Caco-2 (cell line): ENCODE measurements at regions of chr20 and their contacts with region 1.

Region 1: GRCh38 chr20:32779500-32780211 is 17.5 kb downstream of the DNMT3B start:
- DNase-seq: peak in 1 of 2 experiments; percentile 58
- H3K4me3 ChIP-seq: no peak overlapping the region
- H3K4me3 Mint-ChIP-seq: no peak overlapping the region
- H3K27ac Mint-ChIP-seq: no peak overlapping the region
- H3K4me1 ChIP-seq: peaks cover 31% of the 10 kb centered on the region
- H3K4me1 Mint-ChIP-seq: peaks cover 27% of the 10 kb centered on the region
- H3K27me3 ChIP-seq: no peaks in the 10 kb centered on the region
- H3K27me3 Mint-ChIP-seq: no peaks in the 10 kb centered on the region
- CTCF ChIP-seq: no peak

Region 2: GRCh38 chr20:32521780-32522525 is 257.7 kb before region 1 on chr20:
- CTCF ChIA-PET with region 1: interaction called, 9 read pairs
- POLR2A ChIA-PET with region 1: interaction called, 4 read pairs
- intact Hi-C with region 1: loop called (anchors 5 kb)
- DNase-seq: peak; percentile 87 to 94
- H3K4me3 ChIP-seq: no peak overlapping the region
- H3K4me3 Mint-ChIP-seq: no peak overlapping the region
- H3K27ac Mint-ChIP-seq: no peak overlapping the region
- H3K4me1 ChIP-seq: no peaks in the 10 kb centered on the region; the same call in 1 of the 2 replicates
- H3K4me1 Mint-ChIP-seq: no peaks in the 10 kb centered on the region
- H3K27me3 ChIP-seq: no peaks in the 10 kb centered on the region
- H3K27me3 Mint-ChIP-seq: no peaks in the 10 kb centered on the region
- CTCF ChIP-seq: peak; percentile 98 to 99

Region 3: GRCh38 chr20:32674362-32674789 is 105.3 kb before region 1 on chr20:
- CTCF ChIA-PET with region 1: interaction called, 155 read pairs
- POLR2A ChIA-PET with region 1: interaction called, 5 read pairs
- intact Hi-C with region 1: loop called (anchors 1 kb)
- DNase-seq: peak; percentile 79 to 91
- H3K4me3 ChIP-seq: no peak overlapping the region
- H3K4me3 Mint-ChIP-seq: no peak overlapping the region
- H3K27ac Mint-ChIP-seq: peak overlapping the region; percentile 74
- H3K4me1 ChIP-seq: peaks cover 13% of the 10 kb centered on the region; the same call in 1 of the 2 replicates
- H3K4me1 Mint-ChIP-seq: peaks cover 23% of the 10 kb centered on the region
- H3K27me3 ChIP-seq: no peaks in the 10 kb centered on the region
- H3K27me3 Mint-ChIP-seq: no peaks in the 10 kb centered on the region
- CTCF ChIP-seq: peak; percentile 97 to 99

Region 4: DNA sequence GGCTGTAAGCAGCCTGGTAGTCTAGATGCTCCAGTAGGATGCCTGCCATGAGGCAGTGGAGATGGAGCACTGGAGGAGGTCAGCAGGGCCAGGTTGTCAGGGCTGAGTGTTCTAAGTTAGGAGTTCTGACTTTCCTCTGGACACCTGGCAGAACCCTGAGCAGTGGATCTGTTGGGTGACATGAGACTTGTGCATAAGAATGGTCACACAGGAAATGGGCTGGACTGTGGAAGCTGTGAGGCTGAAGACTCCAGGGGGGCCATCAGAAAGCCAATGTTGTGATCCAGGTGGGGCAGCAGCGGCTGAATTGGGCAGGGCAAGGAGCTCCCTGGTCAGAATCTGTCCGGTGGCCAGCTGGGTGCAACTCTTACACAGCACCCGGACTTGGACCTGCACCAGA is 82.0 kb before region 1 on chr20:
- CTCF ChIA-PET with region 1: interaction called, 20 read pairs
- POLR2A ChIA-PET with region 1: interaction called, 3 read pairs
- intact Hi-C with region 1: no loop called
- DNase-seq: no peak
- H3K4me3 ChIP-seq: no peak overlapping the region
- H3K4me3 Mint-ChIP-seq: no peak overlapping the region
- H3K27ac Mint-ChIP-seq: peak overlapping the region; percentile 43
- H3K4me1 ChIP-seq: peaks cover 19% of the 10 kb centered on the region
- H3K4me1 Mint-ChIP-seq: peaks cover 31% of the 10 kb centered on the region
- H3K27me3 ChIP-seq: no peaks in the 10 kb centered on the region
- H3K27me3 Mint-ChIP-seq: no peaks in the 10 kb centered on the region
- CTCF ChIP-seq: no peak

Region 5: GRCh38 chr20:32743237-32744112 is 36.2 kb before region 1 on chr20 and contains the start of gene COMMD7:
- CTCF ChIA-PET with region 1: interaction called, 42 read pairs
- POLR2A ChIA-PET with region 1: interaction called, 9 read pairs
- intact Hi-C with region 1: loop called (anchors 1 kb)
- DNase-seq: peak; percentile 89 to 90
- H3K4me3 ChIP-seq: peak within 1 kb of the TSS; percentile 88
- H3K4me3 Mint-ChIP-seq: peak within 1 kb of the TSS; percentile 89
- H3K27ac Mint-ChIP-seq: peak within 1 kb of the TSS; percentile 87
- H3K4me1 ChIP-seq: peaks cover 39% of the 10 kb centered on the region
- H3K4me1 Mint-ChIP-seq: peaks cover 20% of the 10 kb centered on the region
- H3K27me3 ChIP-seq: no peaks in the 10 kb centered on the region
- H3K27me3 Mint-ChIP-seq: no peaks in the 10 kb centered on the region
- CTCF ChIP-seq: no peak
- total RNA-seq, gene COMMD7: 142 and 160 TPM in 2 replicates

Region 6: GRCh38 chr20:32767418-32768198 is 12.0 kb before region 1 on chr20:
- CTCF ChIA-PET with region 1: interaction called, 53 read pairs
- POLR2A ChIA-PET with region 1: interaction called, 10 read pairs
- intact Hi-C with region 1: loop called (anchors 1 kb)
- DNase-seq: no peak
- H3K4me3 ChIP-seq: no peak overlapping the region
- H3K4me3 Mint-ChIP-seq: no peak overlapping the region
- H3K27ac Mint-ChIP-seq: peak overlapping the region; percentile 18
- H3K4me1 ChIP-seq: peaks cover 14% of the 10 kb centered on the region
- H3K4me1 Mint-ChIP-seq: peaks cover 27% of the 10 kb centered on the region
- H3K27me3 ChIP-seq: no peaks in the 10 kb centered on the region
- H3K27me3 Mint-ChIP-seq: no peaks in the 10 kb centered on the region
- CTCF ChIP-seq: no peak

Region 7: DNA sequence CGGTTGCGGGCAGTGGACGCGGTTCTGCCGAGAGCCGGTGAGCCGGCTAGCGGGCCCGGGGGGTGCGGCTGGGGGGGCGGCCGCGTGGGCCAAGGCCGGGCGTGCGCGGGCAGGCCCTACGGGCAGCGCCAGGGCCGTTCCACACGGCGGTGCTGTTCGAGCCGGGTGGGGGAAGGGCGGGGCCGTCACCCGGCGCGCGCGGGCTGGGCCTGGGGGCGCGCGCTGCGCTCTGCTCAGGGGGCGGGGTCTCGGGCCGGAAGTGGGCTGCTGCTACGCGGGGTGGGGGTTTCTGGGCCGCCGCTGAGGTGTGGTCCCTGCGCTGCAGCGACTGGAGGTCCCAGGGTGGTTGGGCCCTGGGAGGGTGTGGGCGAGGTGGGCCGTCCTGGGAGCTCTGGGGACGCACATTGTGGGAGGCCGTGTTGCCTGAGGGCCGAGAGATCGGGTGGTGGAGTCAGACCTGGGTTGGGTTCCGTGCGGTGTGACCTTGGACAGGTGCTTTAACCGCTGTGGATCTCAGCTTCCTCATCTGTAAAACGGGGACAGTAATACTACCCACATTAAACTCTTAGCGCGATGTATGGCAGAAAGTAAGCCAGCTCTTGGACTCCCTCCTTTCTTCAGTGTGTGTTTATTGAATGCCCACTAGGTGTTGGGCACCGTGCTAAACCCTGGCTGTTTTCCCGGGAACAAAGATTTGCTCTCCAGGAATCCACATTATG is 40.5 kb after region 1 on chr20:
- CTCF ChIA-PET with region 1: interaction called, 12 read pairs
- POLR2A ChIA-PET with region 1: interaction called, 3 read pairs
- intact Hi-C with region 1: no loop called
- DNase-seq: peak; percentile 86 to 94
- H3K4me3 ChIP-seq: peak overlapping the region; percentile 65
- H3K4me3 Mint-ChIP-seq: peak overlapping the region; percentile 92
- H3K27ac Mint-ChIP-seq: peak overlapping the region; percentile 93
- H3K4me1 ChIP-seq: peaks cover 33% of the 10 kb centered on the region
- H3K4me1 Mint-ChIP-seq: peaks cover 34% of the 10 kb centered on the region
- H3K27me3 ChIP-seq: no peaks in the 10 kb centered on the region
- H3K27me3 Mint-ChIP-seq: no peaks in the 10 kb centered on the region
- CTCF ChIP-seq: peak in 1 of 2 experiments; percentile 8